MCF 10A (cell line): ENCODE measurements at regions of chr11 and their contacts with region 1.

Region 1: GRCh38 chr11:75270896-75271418 is 30.4 kb downstream of the TPBGL start:
- DNase-seq: peak; percentile 27
- H3K4me3 Mint-ChIP-seq: no peak overlapping the region
- H3K27ac Mint-ChIP-seq: no peak overlapping the region
- H3K4me1 Mint-ChIP-seq: no peaks in the 10 kb centered on the region
- H3K27me3 Mint-ChIP-seq: no peaks in the 10 kb centered on the region
- CTCF ChIP-seq: peak; percentile 55

Region 2: GRCh38 chr11:75293903-75294302 is 22.9 kb after region 1 on chr11:
- CTCF ChIA-PET with region 1: interaction called, 11 read pairs
- POLR2A ChIA-PET with region 1: interaction called, 3 read pairs
- intact Hi-C with region 1: no loop called
- DNase-seq: no peak
- H3K4me3 Mint-ChIP-seq: no peak overlapping the region
- H3K27ac Mint-ChIP-seq: no peak overlapping the region
- H3K4me1 Mint-ChIP-seq: no peaks in the 10 kb centered on the region
- H3K27me3 Mint-ChIP-seq: no peaks in the 10 kb centered on the region
- CTCF ChIP-seq: no peak